Caco-2 (cell line): ENCODE measurements at regions of chr11 and their contacts with region 1.

Region 1: DNA sequence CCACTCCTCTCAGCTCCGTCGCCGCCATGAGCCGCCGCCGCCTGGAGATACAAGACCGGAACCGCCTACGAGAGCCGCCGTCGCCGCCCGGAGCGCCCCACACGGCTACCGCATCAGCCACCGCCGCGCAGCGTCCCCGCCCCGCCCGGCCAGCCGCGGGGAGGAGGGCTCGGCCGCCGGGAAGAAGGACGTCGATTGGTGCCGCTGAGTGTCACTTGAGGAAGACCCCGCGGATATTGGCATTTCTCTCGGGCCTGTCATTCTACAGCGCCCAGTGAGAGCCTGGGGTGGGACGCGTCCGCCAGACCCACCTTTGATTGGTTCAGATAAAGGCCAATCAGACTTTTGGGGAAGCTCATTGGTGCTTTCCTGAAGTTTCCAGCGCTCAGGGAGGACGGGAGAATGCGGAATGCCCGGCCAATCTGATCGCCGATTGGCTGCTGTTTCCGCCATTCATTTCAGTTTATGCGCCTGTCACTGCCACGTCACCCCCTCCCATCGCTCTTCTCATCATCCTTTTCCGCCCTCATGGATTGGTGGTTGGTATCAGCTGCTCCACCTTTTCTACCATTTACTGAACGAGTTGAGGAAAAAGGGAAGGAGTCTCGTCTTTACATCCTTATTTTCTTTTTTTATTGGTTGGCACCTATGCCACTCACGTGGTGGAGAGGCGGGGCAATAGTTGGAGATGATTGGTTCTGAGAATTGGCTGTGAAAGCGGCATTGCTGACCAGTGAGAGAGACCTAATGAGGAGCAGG is at the start of gene OSBP:
- DNase-seq: peak; percentile 99 to 100
- H3K4me3 ChIP-seq: peak within 1 kb of the TSS; percentile 92
- H3K4me3 Mint-ChIP-seq: peak within 1 kb of the TSS; percentile 98
- H3K27ac Mint-ChIP-seq: peak within 1 kb of the TSS; percentile 98
- H3K4me1 ChIP-seq: peaks cover 29% of the 10 kb centered on the region
- H3K4me1 Mint-ChIP-seq: peaks cover 29% of the 10 kb centered on the region
- H3K27me3 ChIP-seq: no peaks in the 10 kb centered on the region
- H3K27me3 Mint-ChIP-seq: no peaks in the 10 kb centered on the region
- CTCF ChIP-seq: no peak
- total RNA-seq, gene OSBP: 64.5 and 67.5 TPM in 2 replicates

Region 2: DNA sequence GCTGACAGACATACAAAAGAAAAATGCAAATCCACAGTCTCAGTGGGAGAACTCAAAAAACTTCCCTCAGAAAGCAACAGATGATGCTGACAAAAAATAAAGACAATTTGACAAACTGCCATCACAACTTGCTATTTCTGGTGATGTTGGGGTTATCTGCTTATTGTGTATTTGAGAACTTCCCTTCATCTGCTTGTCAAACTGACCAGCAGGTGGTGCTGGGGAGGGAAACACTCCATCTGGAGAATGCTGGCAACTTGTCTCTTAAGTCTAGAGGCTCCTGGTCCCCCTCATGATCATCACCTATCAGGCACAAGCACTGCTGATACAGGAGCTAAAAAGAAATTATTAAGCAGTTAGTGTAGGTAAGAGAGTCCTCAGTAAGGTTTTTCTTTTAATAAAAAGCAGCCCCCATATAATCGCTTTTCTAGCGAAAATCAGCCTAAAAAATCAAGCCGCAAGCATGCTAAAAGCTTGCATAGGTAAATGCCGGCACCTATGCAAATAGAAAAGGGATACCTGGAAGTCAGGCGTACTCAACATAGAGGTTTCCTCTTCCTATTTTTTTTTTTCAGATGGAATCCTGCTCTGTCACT is 518.6 kb before region 1 on chr11:
- CTCF ChIA-PET with region 1: no interaction called
- POLR2A ChIA-PET with region 1: no interaction called
- intact Hi-C with region 1: no loop called
- DNase-seq: peak; percentile 64 to 79
- H3K4me3 ChIP-seq: no peak overlapping the region
- H3K4me3 Mint-ChIP-seq: no peak overlapping the region
- H3K27ac Mint-ChIP-seq: no peak overlapping the region
- H3K4me1 ChIP-seq: no peaks in the 10 kb centered on the region
- H3K4me1 Mint-ChIP-seq: no peaks in the 10 kb centered on the region
- H3K27me3 ChIP-seq: no peaks in the 10 kb centered on the region
- H3K27me3 Mint-ChIP-seq: peaks cover 10% of the 10 kb centered on the region
- CTCF ChIP-seq: peak; percentile 79 to 82

Region 3: DNA sequence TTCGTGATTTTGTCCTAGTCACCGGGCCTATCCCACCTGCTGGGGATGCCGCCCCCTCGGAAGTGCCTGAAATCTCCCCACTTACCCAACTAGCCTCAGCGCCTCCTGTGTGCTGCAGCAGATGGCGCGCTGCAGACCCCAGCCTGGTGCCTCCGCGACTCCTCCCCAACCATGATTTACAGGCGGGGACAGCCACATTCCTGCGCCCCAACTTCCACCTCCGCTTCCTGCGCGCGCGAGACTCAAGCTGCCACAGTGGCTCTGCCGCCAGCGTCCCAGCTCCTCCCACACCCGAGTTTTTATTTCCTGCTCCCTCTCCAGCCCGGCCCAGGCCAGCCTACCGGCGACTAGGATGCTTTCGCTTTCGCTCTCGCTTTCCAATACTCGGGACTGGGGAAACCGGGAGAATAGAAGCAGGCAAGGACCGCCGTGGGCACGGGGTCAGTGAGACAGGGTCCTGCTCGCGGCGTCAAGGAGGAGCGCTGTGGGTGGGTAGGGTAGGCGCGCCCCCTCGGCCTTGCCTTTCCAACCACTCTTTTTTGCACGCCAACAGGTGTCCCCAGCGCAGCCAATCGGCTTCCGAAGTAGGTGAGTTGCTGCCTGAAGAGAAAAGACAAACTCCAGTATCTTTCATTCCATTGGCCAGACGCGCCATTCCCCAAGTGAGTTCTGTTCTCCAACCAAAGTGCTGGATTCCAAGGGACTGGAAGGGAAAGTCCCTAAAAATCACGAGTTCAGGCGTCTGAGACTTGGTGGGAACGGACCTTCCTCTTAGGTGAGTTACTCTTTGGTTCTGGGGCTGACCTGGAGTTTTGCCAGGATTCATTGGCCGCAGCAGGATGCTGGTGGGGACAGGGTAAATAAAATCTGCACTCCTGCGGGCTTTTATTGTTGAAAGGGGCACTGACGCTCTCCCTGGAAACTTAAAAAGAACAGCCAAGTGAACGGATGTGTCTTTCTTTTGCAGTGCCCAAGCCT is 473.0 kb before region 1 on chr11 and contains the start of gene FAM111A:
- CTCF ChIA-PET with region 1: no interaction called
- POLR2A ChIA-PET with region 1: no interaction called
- intact Hi-C with region 1: loop called (anchors 1 kb)
- DNase-seq: peak; percentile 92 to 95
- H3K4me3 ChIP-seq: peak within 1 kb of the TSS; percentile 55
- H3K4me3 Mint-ChIP-seq: peak within 1 kb of the TSS; percentile 98
- H3K27ac Mint-ChIP-seq: peak within 1 kb of the TSS; percentile 94
- H3K4me1 ChIP-seq: peaks cover 21% of the 10 kb centered on the region
- H3K4me1 Mint-ChIP-seq: peaks cover 45% of the 10 kb centered on the region
- H3K27me3 ChIP-seq: no peaks in the 10 kb centered on the region
- H3K27me3 Mint-ChIP-seq: no peaks in the 10 kb centered on the region
- CTCF ChIP-seq: peak in 1 of 2 experiments; percentile 75
- total RNA-seq, gene FAM111A: 76.1 and 78.8 TPM in 2 replicates

Region 4: DNA sequence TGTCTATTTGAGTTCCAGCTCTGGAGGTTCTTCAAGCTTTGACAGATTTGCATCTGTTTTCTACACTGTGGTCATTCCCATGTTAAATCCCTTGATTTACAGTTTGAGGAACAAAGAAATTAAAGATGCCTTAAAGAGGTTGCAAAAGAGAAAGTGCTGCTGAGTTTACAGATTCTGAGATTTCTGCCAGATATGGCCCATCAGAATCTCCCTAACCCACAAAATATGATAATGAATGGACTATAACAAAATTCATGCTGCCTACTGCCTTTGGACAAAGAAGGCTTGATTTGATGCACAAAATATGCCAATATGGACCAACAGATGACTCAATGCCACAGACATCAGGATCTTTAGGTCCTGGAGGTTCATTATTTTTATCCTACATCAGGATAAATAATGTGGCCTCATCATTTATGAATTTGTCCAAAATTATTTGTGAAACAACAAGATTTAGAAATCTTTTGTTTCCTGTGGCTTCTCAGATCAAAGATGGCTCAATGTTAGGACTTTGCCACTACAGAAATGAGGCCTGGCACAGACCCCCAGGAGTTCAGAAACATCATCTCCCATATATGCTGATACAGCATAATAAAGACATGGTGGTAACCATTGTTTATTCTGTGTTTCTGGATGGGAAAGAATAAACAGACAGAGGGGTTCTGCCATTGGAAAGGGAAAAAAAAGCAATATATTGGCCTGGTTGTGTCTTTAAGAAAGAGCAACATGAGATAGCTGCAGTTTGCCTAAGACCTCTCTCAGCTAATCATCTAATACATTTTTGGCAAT is 250.4 kb before region 1 on chr11:
- CTCF ChIA-PET with region 1: no interaction called
- POLR2A ChIA-PET with region 1: no interaction called
- intact Hi-C with region 1: no loop called
- DNase-seq: no peak
- H3K4me3 ChIP-seq: no peak overlapping the region
- H3K4me3 Mint-ChIP-seq: no peak overlapping the region
- H3K27ac Mint-ChIP-seq: no peak overlapping the region
- H3K4me1 ChIP-seq: no peaks in the 10 kb centered on the region
- H3K4me1 Mint-ChIP-seq: no peaks in the 10 kb centered on the region
- H3K27me3 ChIP-seq: no peaks in the 10 kb centered on the region
- H3K27me3 Mint-ChIP-seq: peaks cover 2% of the 10 kb centered on the region
- CTCF ChIP-seq: no peak

Region 5: DNA sequence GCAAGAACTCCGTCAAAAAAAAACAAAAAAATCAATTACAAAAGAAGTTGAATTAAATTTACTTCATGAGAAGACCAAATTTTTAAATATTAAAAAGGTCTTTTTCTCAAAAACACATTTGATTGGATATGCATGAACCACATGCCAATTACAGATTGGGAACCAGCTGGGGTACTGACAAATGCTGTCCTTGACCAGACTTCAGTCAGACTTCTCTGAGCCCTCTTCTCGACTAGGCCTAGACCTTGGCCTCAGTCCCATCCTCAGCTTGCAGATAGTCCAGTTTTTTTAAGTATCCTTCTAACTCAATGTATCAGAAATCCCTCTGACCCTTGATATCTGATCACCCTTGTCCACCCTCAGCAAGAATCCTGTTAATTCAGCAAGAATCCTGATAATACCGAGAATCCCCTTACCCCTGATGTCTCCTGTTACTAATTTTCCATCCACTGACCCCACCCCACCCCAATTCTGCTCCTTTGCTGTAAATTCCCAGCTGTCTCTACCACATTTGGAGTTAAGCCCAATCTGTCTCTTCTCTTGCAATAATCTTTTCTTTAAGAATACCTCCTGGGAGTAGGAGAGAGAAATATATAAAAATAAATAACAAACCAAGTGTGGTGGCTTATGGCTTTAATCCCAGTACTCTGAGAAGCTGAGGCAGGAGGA is 73.5 kb before region 1 on chr11:
- CTCF ChIA-PET with region 1: no interaction called
- POLR2A ChIA-PET with region 1: interaction called, 3 read pairs
- intact Hi-C with region 1: loop called (anchors 1 kb)
- DNase-seq: no peak
- H3K4me3 ChIP-seq: no peak overlapping the region
- H3K4me3 Mint-ChIP-seq: no peak overlapping the region
- H3K27ac Mint-ChIP-seq: no peak overlapping the region
- H3K4me1 ChIP-seq: peaks cover 9% of the 10 kb centered on the region
- H3K4me1 Mint-ChIP-seq: peaks cover 6% of the 10 kb centered on the region
- H3K27me3 ChIP-seq: no peaks in the 10 kb centered on the region
- H3K27me3 Mint-ChIP-seq: no peaks in the 10 kb centered on the region
- CTCF ChIP-seq: no peak

Region 6: GRCh38 chr11:59550368-59550841 is 65.4 kb before region 1 on chr11:
- CTCF ChIA-PET with region 1: no interaction called
- POLR2A ChIA-PET with region 1: interaction called, 3 read pairs
- intact Hi-C with region 1: loop called (anchors 1 kb)
- DNase-seq: peak; percentile 96 to 97
- H3K4me3 ChIP-seq: peak overlapping the region; percentile 58
- H3K4me3 Mint-ChIP-seq: peak overlapping the region; percentile 80
- H3K27ac Mint-ChIP-seq: peak overlapping the region; percentile 100
- H3K4me1 ChIP-seq: peaks cover 28% of the 10 kb centered on the region
- H3K4me1 Mint-ChIP-seq: peaks cover 32% of the 10 kb centered on the region
- H3K27me3 ChIP-seq: no peaks in the 10 kb centered on the region
- H3K27me3 Mint-ChIP-seq: peaks cover 7% of the 10 kb centered on the region
- CTCF ChIP-seq: peak; percentile 28 to 63

Region 7: GRCh38 chr11:59560702-59561469 is 54.9 kb before region 1 on chr11:
- CTCF ChIA-PET with region 1: no interaction called
- POLR2A ChIA-PET with region 1: interaction called, 5 read pairs
- intact Hi-C with region 1: loop called (anchors 2 kb)
- DNase-seq: peak; percentile 88 to 92
- H3K4me3 ChIP-seq: peak overlapping the region; percentile 64
- H3K4me3 Mint-ChIP-seq: peak overlapping the region; percentile 75
- H3K27ac Mint-ChIP-seq: peak overlapping the region; percentile 74
- H3K4me1 ChIP-seq: peaks cover 8% of the 10 kb centered on the region; the same call in 1 of the 2 replicates
- H3K4me1 Mint-ChIP-seq: peaks cover 19% of the 10 kb centered on the region
- H3K27me3 ChIP-seq: no peaks in the 10 kb centered on the region
- H3K27me3 Mint-ChIP-seq: no peaks in the 10 kb centered on the region
- CTCF ChIP-seq: no peak

Region 8: GRCh38 chr11:59776210-59777066 is 160.6 kb after region 1 on chr11:
- CTCF ChIA-PET with region 1: no interaction called
- POLR2A ChIA-PET with region 1: interaction called, 3 read pairs
- intact Hi-C with region 1: loop called (anchors 1 kb)
- DNase-seq: peak; percentile 68 to 79
- H3K4me3 ChIP-seq: no peak overlapping the region
- H3K4me3 Mint-ChIP-seq: peak overlapping the region; percentile 66
- H3K27ac Mint-ChIP-seq: peak overlapping the region; percentile 74
- H3K4me1 ChIP-seq: peaks cover 65% of the 10 kb centered on the region
- H3K4me1 Mint-ChIP-seq: peaks cover 57% of the 10 kb centered on the region
- H3K27me3 ChIP-seq: no peaks in the 10 kb centered on the region
- H3K27me3 Mint-ChIP-seq: no peaks in the 10 kb centered on the region
- CTCF ChIP-seq: no peak